ENCODE measurements at regions of chr19 and their contacts with region 1.

Region 1: GRCh38 chr19:54023191-54023590 is 31.8 kb downstream of the CACNG6 start:
- DNase-seq: no peak
- H3K4me3 ChIP-seq: no peak overlapping the region
- H3K4me3 Mint-ChIP-seq: no peak overlapping the region
- H3K27ac ChIP-seq: no peak overlapping the region
- H3K27ac Mint-ChIP-seq: peak overlapping the region in 1 of 7 donors; percentile 29
- H3K4me1 ChIP-seq: peaks cover 5% of the 10 kb centered on the region
- H3K4me1 Mint-ChIP-seq: peaks cover 0 to 8% (median 2%) of the 10 kb centered on the region in 4 donors
- H3K27me3 ChIP-seq: no peaks in the 10 kb centered on the region
- H3K27me3 Mint-ChIP-seq: peaks cover 16 to 33% of the 10 kb centered on the region in 2 donors

Region 2: DNA sequence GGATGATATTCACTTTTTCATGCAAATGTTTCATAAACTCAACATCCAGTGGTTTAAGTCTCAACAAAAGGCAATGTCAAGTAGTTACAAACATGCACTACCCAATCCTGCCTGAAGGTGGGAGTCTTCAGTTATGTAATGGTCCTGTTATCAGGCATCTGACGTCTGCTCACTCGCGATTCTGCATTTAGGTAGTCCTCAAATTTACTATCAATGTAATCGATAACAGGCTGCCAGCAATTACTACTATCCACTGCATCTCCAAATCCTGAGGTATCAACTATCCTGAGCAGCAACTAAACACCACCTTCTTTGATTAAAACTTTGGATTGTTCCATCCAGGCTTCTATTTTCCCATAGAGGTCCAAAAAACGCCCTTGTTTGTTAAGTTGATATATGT is 250.2 kb before region 1 on chr19:
- CTCF ChIA-PET with region 1: interaction called, 8 read pairs
- POLR2A ChIA-PET with region 1: no interaction called
- intact Hi-C with region 1: loop called (anchors 5 kb)
- DNase-seq: peak; percentile 32 to 47 (median 46)
- H3K4me3 ChIP-seq: no peak overlapping the region
- H3K4me3 Mint-ChIP-seq: peak overlapping the region in 1 of 8 donors; percentile 18
- H3K27ac ChIP-seq: no peak overlapping the region
- H3K27ac Mint-ChIP-seq: no peak overlapping the region
- H3K4me1 ChIP-seq: no peaks in the 10 kb centered on the region
- H3K4me1 Mint-ChIP-seq: peaks cover 0 to 5% (median 2%) of the 10 kb centered on the region in 4 donors
- H3K27me3 ChIP-seq: no peaks in the 10 kb centered on the region
- H3K27me3 Mint-ChIP-seq: peaks cover 0 to 6% of the 10 kb centered on the region in 2 donors

Region 3: DNA sequence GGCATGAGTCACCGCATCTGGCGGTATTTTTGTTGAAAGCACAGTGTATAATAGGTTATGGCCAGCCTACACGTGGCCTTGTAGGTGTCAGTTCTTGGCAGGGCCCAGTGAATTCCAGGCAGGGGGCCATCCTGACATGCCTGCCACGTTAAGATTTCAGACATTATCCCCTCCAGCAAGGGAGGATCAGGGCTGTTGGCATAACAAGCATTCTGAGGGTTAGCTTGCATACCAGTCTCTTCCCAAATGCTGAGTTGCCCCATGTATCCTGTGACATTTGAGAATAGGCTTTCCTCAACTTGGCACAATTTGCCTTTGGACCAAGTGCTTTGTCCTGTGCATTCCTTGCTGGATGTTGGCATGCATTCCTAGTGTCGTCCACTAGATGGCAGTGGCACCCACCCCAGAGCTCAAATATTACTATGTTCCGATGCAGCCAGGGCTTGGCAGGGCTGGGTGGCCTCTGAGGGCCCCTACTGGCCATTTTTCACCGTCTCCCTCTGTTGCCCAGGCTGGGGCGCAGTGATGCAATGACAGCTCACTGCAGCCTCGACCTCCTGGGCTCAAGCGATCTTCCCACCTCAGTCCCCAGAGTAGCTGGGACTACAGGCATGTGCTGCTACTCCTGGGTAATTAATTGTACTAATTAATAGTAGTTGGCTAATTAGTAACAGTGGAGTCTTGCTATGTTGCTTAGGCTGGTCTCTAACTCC is 230.3 kb before region 1 on chr19:
- CTCF ChIA-PET with region 1: interaction called, 97 read pairs
- POLR2A ChIA-PET with region 1: no interaction called
- intact Hi-C with region 1: loop called (anchors 1 kb)
- DNase-seq: peak; percentile 67 to 74 (median 71)
- H3K4me3 ChIP-seq: no peak overlapping the region
- H3K4me3 Mint-ChIP-seq: no peak overlapping the region
- H3K27ac ChIP-seq: no peak overlapping the region
- H3K27ac Mint-ChIP-seq: no peak overlapping the region
- H3K4me1 ChIP-seq: no peaks in the 10 kb centered on the region
- H3K4me1 Mint-ChIP-seq: peaks cover 0 to 5% (median 3%) of the 10 kb centered on the region in 4 donors
- H3K27me3 ChIP-seq: no peaks in the 10 kb centered on the region
- H3K27me3 Mint-ChIP-seq: peaks cover 2 to 4% of the 10 kb centered on the region in 2 donors

Region 4: GRCh38 chr19:53849237-53849676 is 173.9 kb before region 1 on chr19:
- CTCF ChIA-PET with region 1: interaction called, 25 read pairs
- POLR2A ChIA-PET with region 1: no interaction called
- intact Hi-C with region 1: no loop called
- DNase-seq: no peak
- H3K4me3 ChIP-seq: no peak overlapping the region
- H3K4me3 Mint-ChIP-seq: peak overlapping the region in 1 of 8 donors; percentile 23
- H3K27ac ChIP-seq: no peak overlapping the region
- H3K27ac Mint-ChIP-seq: no peak overlapping the region
- H3K4me1 ChIP-seq: peaks cover 7% of the 10 kb centered on the region
- H3K4me1 Mint-ChIP-seq: peaks cover 6 to 12% (median 9%) of the 10 kb centered on the region in 4 donors
- H3K27me3 ChIP-seq: no peaks in the 10 kb centered on the region
- H3K27me3 Mint-ChIP-seq: peaks cover 24% of the 10 kb centered on the region in 2 donors

Measured in CD4-positive, alpha-beta memory T cell (primary cell).